ENCODE measurements at regions of chr22 and their contacts with region 1.

Region 1: GRCh38 chr22:40898850-40899357 is 37.0 kb upstream of the DNAJB7 start:
- DNase-seq: peak; percentile 23
- ATAC-seq: peak; percentile 78
- H3K4me3 ChIP-seq: no peak overlapping the region
- H3K27ac ChIP-seq: no peak overlapping the region
- H3K4me1 ChIP-seq: no peaks in the 10 kb centered on the region
- H3K27me3 ChIP-seq: no peaks in the 10 kb centered on the region
- CTCF ChIP-seq: peak; percentile 48 to 59 (median 56); a peak in 5 of 6 replicates
- POLR2A ChIP-seq: no peak
- RAD21 ChIP-seq: peak; percentile 78

Region 2: DNA sequence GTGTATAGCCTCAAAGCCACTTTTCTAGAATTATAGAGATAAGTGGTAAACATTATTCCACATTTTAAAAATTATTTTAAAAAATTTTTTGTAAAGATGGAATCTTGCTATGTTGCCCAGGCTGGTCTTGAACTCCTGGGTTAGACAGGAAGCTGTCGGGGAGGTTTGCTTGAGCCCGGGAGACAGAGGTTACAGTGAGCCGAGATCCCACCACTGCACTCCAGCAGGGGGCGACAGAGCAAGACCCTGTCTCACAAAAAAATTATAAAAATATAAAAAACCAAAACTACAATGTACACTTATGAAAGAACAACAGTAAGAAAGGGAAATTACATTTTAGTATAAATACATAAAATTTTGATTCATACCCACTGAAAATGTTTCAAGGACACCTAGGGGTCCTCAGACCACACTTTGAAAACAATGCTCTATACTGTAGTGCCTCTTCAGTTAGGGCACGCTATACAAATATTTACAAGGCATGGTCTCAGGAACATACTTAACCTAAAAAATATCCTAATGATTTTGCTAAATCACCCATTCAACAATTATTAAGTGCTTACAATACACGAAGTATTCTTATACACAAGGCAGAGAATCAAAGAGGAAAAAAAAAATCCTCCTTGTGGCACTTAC is 373.5 kb before region 1 on chr22:
- CTCF ChIA-PET with region 1: interaction called, 5 read pairs
- POLR2A ChIA-PET with region 1: no interaction called
- RAD21 ChIA-PET with region 1: no interaction called
- intact Hi-C with region 1: loop called (anchors 1 kb)
- DNase-seq: no peak
- ATAC-seq: peak; percentile 91
- H3K4me3 ChIP-seq: no peak overlapping the region
- H3K27ac ChIP-seq: no peak overlapping the region
- H3K4me1 ChIP-seq: peaks cover 2 to 20% of the 10 kb centered on the region in 2 experiments; a peak in 2 of 4 replicates
- H3K27me3 ChIP-seq: no peaks in the 10 kb centered on the region
- CTCF ChIP-seq: peak; percentile 74 to 90 (median 77); a peak in 5 of 6 replicates
- POLR2A ChIP-seq: no peak
- RAD21 ChIP-seq: peak; percentile 76

Region 3: GRCh38 chr22:40645579-40646197 is 253.2 kb before region 1 on chr22:
- CTCF ChIA-PET with region 1: interaction called, 11 read pairs
- POLR2A ChIA-PET with region 1: no interaction called
- RAD21 ChIA-PET with region 1: interaction called, 4 to 5 read pairs
- intact Hi-C with region 1: loop called (anchors 10 kb)
- DNase-seq: no peak
- ATAC-seq: no peak
- H3K4me3 ChIP-seq: no peak overlapping the region; a peak in 1 of 4 replicates
- H3K27ac ChIP-seq: no peak overlapping the region
- H3K4me1 ChIP-seq: peaks cover 8 to 23% of the 10 kb centered on the region in 2 experiments; a peak in 3 of 4 replicates
- H3K27me3 ChIP-seq: no peaks in the 10 kb centered on the region
- CTCF ChIP-seq: no peak
- POLR2A ChIP-seq: no peak
- RAD21 ChIP-seq: no peak

Region 4: GRCh38 chr22:40651563-40652501 is 247.1 kb before region 1 on chr22:
- CTCF ChIA-PET with region 1: interaction called, 11 read pairs
- POLR2A ChIA-PET with region 1: interaction called, 3 read pairs
- RAD21 ChIA-PET with region 1: interaction called, 4 to 5 read pairs
- intact Hi-C with region 1: loop called (anchors 10 kb)
- DNase-seq: peak; percentile 95
- ATAC-seq: peak; percentile 94
- H3K4me3 ChIP-seq: peak overlapping the region; percentile 66 to 67
- H3K27ac ChIP-seq: peak overlapping the region; percentile 98
- H3K4me1 ChIP-seq: peaks cover 9 to 39% of the 10 kb centered on the region in 2 experiments
- H3K27me3 ChIP-seq: no peaks in the 10 kb centered on the region
- CTCF ChIP-seq: no peak
- POLR2A ChIP-seq: peak; percentile 93
- RAD21 ChIP-seq: no peak

Region 5: GRCh38 chr22:40679964-40680818 is 218.7 kb before region 1 on chr22:
- CTCF ChIA-PET with region 1: interaction called, 32 read pairs
- POLR2A ChIA-PET with region 1: no interaction called
- RAD21 ChIA-PET with region 1: interaction called, 4 to 12 read pairs
- intact Hi-C with region 1: loop called (anchors 2 kb)
- DNase-seq: no peak
- ATAC-seq: no peak
- H3K4me3 ChIP-seq: no peak overlapping the region
- H3K27ac ChIP-seq: no peak overlapping the region
- H3K4me1 ChIP-seq: peaks cover 0 to 11% of the 10 kb centered on the region in 2 experiments; a peak in 3 of 4 replicates
- H3K27me3 ChIP-seq: peaks cover 12% of the 10 kb centered on the region; the same call in 1 of the 2 replicates
- CTCF ChIP-seq: peak in 1 of 3 experiments; percentile 26; a peak in 1 of 6 replicates
- POLR2A ChIP-seq: no peak
- RAD21 ChIP-seq: no peak